Activated CD4-positive, alpha-beta T cell treated with anti-CD3 and anti-CD28 coated beads for 36 hours (primary cell): ENCODE measurements at regions of chr15 and their contacts with region 1.

Region 1: DNA sequence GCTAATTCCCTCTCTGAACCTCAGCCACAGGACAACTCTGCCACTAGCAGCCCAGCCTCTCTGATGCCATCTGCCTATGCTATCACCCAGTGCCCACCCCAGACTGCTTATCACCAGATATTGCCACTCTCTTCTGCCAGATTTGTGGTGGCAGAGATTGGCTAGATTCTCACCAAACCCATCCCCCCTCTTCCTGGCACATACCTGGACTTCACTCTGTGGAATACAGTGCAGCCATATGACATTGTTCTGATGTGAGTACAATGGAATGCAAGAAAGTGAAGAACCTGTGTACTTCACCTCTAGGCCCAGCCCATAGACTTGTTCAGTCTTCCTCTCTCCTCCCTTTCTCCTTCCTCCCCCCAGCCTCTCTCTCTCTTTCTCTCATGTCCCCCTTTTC is 46.9 kb upstream of the NTRK3 start:
- DNase-seq: no peak
- ATAC-seq: no peak
- H3K4me3 Mint-ChIP-seq: no peak overlapping the region
- H3K27ac Mint-ChIP-seq: no peak overlapping the region
- H3K4me1 Mint-ChIP-seq: no peaks in the 10 kb centered on the region
- H3K27me3 Mint-ChIP-seq: peaks cover 4% of the 10 kb centered on the region

Region 2: DNA sequence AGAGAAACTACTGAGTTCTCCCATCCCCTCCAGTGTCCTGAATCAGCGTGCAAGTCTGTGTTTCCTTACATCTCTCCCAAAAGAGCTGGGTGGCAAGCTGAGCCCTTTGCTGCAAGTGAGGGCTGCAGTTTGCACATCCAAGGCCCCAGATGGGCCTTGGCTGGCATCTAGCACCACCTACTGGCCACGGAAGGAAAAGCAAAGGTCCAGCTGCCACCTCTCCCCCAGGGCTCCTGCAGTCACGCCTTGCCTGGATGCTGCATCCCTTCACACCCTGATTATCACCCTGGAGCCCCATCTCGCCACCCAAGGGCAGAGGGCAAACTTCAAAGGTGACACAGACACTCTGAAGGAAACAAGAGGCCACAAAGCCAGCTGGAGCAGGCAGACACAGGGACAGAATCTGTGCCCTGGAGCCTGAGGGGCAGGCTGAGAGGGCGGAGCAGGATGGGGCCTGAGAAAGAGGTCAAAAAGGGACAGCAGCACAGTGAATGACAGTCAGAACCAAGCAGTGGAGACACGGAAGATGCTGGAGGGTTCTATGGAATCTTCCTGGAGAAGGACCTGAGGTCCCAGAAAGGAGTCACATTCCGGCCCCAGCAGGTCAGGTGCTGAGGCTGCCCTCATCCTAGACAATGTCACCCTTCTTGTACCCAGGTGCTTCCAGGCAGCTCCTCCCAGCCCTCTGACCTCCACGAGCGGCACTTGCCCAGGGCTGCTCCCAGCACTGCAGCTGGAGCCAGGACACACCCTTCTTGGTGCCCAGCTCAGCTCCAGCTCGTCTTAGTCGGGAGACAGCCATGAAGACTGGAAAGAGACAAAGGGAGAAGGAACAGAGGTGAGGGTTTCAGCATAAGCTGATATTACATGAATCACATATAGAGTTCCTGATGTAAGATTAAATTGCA is 28.6 kb before region 1 on chr15:
- CTCF ChIA-PET with region 1: interaction called, 11 read pairs
- POLR2A ChIA-PET with region 1: no interaction called
- intact Hi-C with region 1: no loop called
- DNase-seq: peak; percentile 81
- ATAC-seq: peak; percentile 82
- H3K4me3 Mint-ChIP-seq: no peak overlapping the region
- H3K27ac Mint-ChIP-seq: no peak overlapping the region
- H3K4me1 Mint-ChIP-seq: no peaks in the 10 kb centered on the region
- H3K27me3 Mint-ChIP-seq: peaks cover 16% of the 10 kb centered on the region

Region 3: DNA sequence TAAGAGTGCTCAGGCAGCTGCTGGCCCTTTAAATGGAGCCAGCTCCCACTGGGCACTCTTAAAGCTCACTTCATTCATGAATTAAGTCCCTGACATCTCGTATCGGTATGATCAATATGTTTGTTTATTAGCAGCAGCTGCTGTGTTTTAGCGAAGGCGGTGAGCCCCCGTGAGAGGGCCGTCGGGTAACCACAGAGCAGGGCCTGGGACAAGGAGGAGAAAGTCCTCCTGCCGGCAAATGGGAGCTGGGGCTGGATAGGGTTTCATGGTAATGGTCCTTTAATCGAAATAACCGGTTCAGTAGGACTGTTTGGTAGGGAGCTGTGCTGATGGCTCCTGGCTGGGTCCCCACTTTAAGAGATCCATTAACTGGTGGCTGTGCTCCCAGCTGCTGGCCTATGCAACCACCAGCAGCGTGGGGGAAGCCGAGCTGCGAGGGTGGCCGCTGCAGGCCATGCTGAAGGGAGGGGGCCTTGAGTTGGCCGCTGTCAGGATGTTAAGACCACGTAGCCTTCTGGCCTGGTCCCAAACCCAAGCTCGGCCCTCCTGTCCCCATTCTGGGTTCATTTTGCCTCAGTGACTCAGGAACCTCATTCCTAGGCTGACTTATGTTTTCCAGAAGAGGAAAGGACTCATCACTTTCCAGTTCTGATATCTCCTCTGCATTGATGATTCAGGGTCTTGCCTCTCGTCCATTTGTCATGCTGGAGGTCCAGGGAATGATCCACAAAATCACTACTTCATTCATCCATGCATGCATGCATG is 20.8 kb after region 1 on chr15:
- CTCF ChIA-PET with region 1: no interaction called
- POLR2A ChIA-PET with region 1: no interaction called
- intact Hi-C with region 1: no loop called
- DNase-seq: no peak
- ATAC-seq: no peak
- H3K4me3 Mint-ChIP-seq: no peak overlapping the region
- H3K27ac Mint-ChIP-seq: no peak overlapping the region
- H3K4me1 Mint-ChIP-seq: no peaks in the 10 kb centered on the region
- H3K27me3 Mint-ChIP-seq: peaks cover 13% of the 10 kb centered on the region